ENCODE measurements at regions of chr22 and their contacts with region 1.

Region 1: GRCh38 chr22:41403532-41404318 is 22.0 kb downstream of the TEF start:
- DNase-seq: peak; percentile 82 to 83
- H3K4me3 ChIP-seq: no peak overlapping the region
- H3K27ac ChIP-seq: no peak overlapping the region
- H3K4me1 ChIP-seq: peaks cover 13% of the 10 kb centered on the region
- H3K27me3 ChIP-seq: no peaks in the 10 kb centered on the region
- CTCF ChIP-seq: peak; percentile 97

Region 2: GRCh38 chr22:41217553-41218157 is 186.1 kb before region 1 on chr22:
- CTCF ChIA-PET with region 1: no interaction called
- POLR2A ChIA-PET with region 1: no interaction called
- intact Hi-C with region 1: no loop called
- DNase-seq: no peak
- H3K4me3 ChIP-seq: no peak overlapping the region
- H3K27ac ChIP-seq: peak overlapping the region; percentile 30
- H3K4me1 ChIP-seq: no peaks in the 10 kb centered on the region; the same call in 1 of the 2 replicates
- H3K27me3 ChIP-seq: no peaks in the 10 kb centered on the region
- CTCF ChIP-seq: no peak

Region 3: DNA sequence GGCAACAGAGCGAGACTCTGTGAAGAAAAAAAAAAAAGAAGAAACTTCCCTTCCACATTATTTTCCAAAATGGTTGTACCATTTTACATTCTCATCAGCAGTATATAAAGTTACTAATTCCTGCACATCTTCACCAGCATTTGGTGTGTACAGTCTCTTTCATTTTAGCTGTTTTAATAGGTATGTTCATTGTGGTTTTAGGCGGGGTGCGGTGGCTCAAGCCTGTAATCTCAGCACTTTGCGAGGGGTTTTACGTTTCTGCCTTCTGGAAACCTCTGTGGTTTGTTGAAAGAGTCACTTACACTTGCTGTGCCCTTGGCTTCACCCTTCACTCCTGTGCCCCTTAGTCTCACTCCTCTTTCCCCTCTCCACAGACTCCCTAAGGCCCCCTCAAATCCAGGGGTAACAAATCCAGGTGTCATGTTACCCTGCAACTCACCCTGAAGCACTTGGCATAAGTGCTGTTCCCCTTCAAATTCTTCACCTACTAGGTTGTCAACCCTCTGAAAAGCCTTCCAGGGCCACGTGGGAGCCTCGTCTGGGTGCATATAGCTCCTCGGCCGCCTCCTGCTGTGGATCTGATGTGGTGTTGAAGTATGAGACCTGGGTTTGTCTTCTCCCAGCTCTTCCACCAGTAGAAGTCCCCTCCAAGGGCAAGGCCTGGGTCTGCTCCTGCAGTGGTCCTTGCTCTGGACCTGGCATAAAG is 22.1 kb after region 1 on chr22:
- CTCF ChIA-PET with region 1: no interaction called
- POLR2A ChIA-PET with region 1: no interaction called
- intact Hi-C with region 1: no loop called
- DNase-seq: no peak
- H3K4me3 ChIP-seq: no peak overlapping the region
- H3K27ac ChIP-seq: no peak overlapping the region
- H3K4me1 ChIP-seq: no peaks in the 10 kb centered on the region
- H3K27me3 ChIP-seq: no peaks in the 10 kb centered on the region
- CTCF ChIP-seq: no peak

Region 4: GRCh38 chr22:41468381-41469217 is 64.9 kb after region 1 on chr22 and contains the starts of genes ACO2 and PHF5A:
- CTCF ChIA-PET with region 1: interaction called, 4 read pairs
- POLR2A ChIA-PET with region 1: interaction called, 11 read pairs
- intact Hi-C with region 1: no loop called
- DNase-seq: peak; percentile 94 to 96
- H3K4me3 ChIP-seq: peak within 1 kb of the TSS; percentile 84
- H3K27ac ChIP-seq: peak within 1 kb of the TSS; percentile 78
- H3K4me1 ChIP-seq: peaks cover 25% of the 10 kb centered on the region
- H3K27me3 ChIP-seq: no peaks in the 10 kb centered on the region
- CTCF ChIP-seq: no peak
- total RNA-seq, gene ACO2: 76.7 and 80.0 TPM in 2 replicates
- total RNA-seq, gene PHF5A: 49.1 and 62.9 TPM in 2 replicates

Measured in PC-9 (cell line).